Panc1 (cell line): ENCODE measurements at regions of chr19 and their contacts with region 1.

Region 1: DNA sequence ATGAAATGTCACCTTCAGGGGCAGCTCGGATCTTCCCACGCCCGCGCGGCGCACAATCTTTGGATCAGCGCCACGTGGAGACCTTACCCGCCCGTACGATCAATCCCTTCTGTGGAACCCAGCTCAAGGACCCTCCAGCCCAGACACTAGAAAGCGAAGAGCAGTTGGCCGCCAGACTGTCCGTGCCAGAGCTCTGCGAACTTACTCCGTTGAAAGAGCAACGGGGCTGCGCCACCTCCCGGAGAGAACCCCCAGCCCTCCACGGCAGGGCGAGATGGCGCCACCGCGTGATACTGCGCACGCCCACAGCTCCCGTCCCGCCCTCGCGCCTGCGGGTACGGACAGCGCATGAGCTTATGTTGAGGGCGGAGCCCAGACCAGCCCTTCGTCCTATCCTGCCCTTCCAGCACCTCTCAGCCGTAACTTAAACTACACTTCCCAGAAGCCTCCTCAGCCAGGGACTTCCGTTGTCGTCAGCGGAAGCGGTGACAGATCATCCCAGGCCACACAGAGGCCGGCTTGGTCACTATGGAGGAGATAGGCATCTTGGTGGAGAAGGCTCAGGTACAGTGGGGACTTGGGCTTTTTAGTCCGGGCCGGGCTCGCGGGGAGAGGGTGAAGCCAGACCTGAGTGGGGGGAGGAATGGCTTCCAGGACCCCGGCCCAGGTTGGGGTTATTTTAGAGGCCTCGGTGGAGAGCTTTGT is at the start of gene PSMC4:
- DNase-seq: peak; percentile 100
- ATAC-seq: peak; percentile 98
- H3K4me3 ChIP-seq: peak within 1 kb of the TSS; percentile 35 to 50
- H3K27ac ChIP-seq: peak within 1 kb of the TSS; percentile 82
- H3K4me1 ChIP-seq: peaks cover 17% of the 10 kb centered on the region
- H3K27me3 ChIP-seq: no peaks in the 10 kb centered on the region
- CTCF ChIP-seq: no peak
- total RNA-seq, gene PSMC4: 2,386 TPM

Region 2: GRCh38 chr19:39878398-39878797 is 92.4 kb before region 1 on chr19:
- CTCF ChIA-PET with region 1: interaction called, 16 read pairs
- POLR2A ChIA-PET with region 1: interaction called, 5 read pairs
- in situ Hi-C with region 1: no loop called
- intact Hi-C with region 1: no loop called
- DNase-seq: no peak
- ATAC-seq: no peak
- H3K4me3 ChIP-seq: no peak overlapping the region
- H3K27ac ChIP-seq: no peak overlapping the region
- H3K4me1 ChIP-seq: no peaks in the 10 kb centered on the region
- H3K27me3 ChIP-seq: no peaks in the 10 kb centered on the region
- CTCF ChIP-seq: no peak

Region 3: GRCh38 chr19:39924389-39924788 is 46.4 kb before region 1 on chr19:
- CTCF ChIA-PET with region 1: interaction called, 16 read pairs
- POLR2A ChIA-PET with region 1: interaction called, 16 read pairs
- in situ Hi-C with region 1: no loop called
- intact Hi-C with region 1: no loop called
- DNase-seq: no peak
- ATAC-seq: peak; percentile 6; the same call in 1 of the 2 replicates
- H3K4me3 ChIP-seq: no peak overlapping the region
- H3K27ac ChIP-seq: no peak overlapping the region
- H3K4me1 ChIP-seq: no peaks in the 10 kb centered on the region
- H3K27me3 ChIP-seq: peaks cover 5% of the 10 kb centered on the region; the same call in 1 of the 2 replicates
- CTCF ChIP-seq: no peak

Region 4: DNA sequence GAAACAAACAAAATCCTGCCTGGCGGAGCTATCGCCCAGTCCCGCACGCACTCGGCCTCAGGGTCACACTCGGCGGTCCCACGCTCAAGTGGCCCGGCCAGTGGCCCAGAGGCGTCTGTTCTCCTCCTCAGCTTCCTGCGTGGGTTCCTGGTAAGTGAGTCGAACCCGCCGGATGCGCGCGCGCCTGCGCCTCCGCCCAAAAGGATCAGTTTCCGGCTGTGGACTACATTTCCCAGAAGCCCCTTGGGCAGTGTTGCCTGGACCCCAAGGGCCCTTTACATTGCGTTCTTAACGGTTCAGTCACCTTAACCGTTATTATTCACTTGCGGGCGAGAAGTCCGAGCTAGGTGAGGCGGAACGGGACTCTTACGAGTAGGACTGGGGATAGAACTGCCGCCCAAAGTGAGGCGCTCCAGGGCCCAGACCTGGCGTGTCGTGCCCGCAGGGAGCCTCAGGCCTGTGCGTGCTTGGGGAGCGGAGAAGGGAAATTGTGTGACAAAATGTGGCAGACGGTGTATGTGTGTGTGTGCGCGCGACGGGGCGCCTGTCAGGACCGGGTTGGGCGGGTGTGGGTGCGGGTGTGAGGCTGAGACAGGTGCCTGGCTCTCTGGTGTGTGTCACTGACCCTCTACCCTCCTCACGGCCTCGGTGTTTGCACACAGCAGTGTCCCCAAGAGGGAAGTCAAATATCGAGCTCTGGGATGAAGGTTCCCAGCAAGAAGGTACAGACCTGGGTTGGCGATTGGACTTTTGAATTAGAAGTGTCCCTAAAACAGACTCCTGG is 26.2 kb after region 1 on chr19 and contains the start of gene ZNF546:
- CTCF ChIA-PET with region 1: interaction called, 15 read pairs
- POLR2A ChIA-PET with region 1: interaction called, 55 read pairs
- in situ Hi-C with region 1: no loop called
- intact Hi-C with region 1: loop called (anchors 1 kb)
- DNase-seq: peak; percentile 100
- ATAC-seq: peak; percentile 98
- H3K4me3 ChIP-seq: peak within 1 kb of the TSS; percentile 35 to 49
- H3K27ac ChIP-seq: peak within 1 kb of the TSS; percentile 83
- H3K4me1 ChIP-seq: peaks cover 19% of the 10 kb centered on the region
- H3K27me3 ChIP-seq: no peaks in the 10 kb centered on the region
- CTCF ChIP-seq: no peak
- total RNA-seq, gene ZNF546: 68.4 TPM

Region 5: DNA sequence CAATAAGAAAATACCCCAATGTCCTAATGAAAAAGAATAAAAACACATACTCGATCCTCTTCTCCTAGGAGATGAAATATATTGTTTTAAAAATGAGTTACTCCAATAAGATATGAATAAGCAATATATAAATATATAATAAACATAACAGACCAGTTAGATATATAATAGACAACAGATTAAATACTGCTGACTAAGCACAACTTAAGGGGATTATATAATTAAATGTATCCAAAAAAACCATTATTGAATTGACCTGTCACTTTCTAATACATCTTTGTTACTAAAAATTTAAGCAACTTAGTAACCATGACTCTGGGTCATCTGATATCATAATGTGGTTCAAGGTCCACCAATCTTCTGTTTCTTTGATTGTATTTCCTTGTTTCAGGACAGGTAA is 99.2 kb after region 1 on chr19:
- CTCF ChIA-PET with region 1: interaction called, 12 read pairs
- POLR2A ChIA-PET with region 1: interaction called, 4 read pairs
- in situ Hi-C with region 1: no loop called
- intact Hi-C with region 1: no loop called
- DNase-seq: no peak
- ATAC-seq: no peak
- H3K4me3 ChIP-seq: no peak overlapping the region
- H3K27ac ChIP-seq: no peak overlapping the region
- H3K4me1 ChIP-seq: no peaks in the 10 kb centered on the region
- H3K27me3 ChIP-seq: no peaks in the 10 kb centered on the region
- CTCF ChIP-seq: no peak

Region 6: GRCh38 chr19:41657157-41657556 is 1686.3 kb after region 1 on chr19:
- CTCF ChIA-PET with region 1: no interaction called
- POLR2A ChIA-PET with region 1: no interaction called
- in situ Hi-C with region 1: no loop called
- intact Hi-C with region 1: no loop called
- DNase-seq: no peak
- ATAC-seq: no peak
- H3K4me3 ChIP-seq: no peak overlapping the region
- H3K27ac ChIP-seq: no peak overlapping the region
- H3K4me1 ChIP-seq: no peaks in the 10 kb centered on the region
- H3K27me3 ChIP-seq: no peaks in the 10 kb centered on the region; the same call in 1 of the 2 replicates
- CTCF ChIP-seq: no peak